Heart left ventricle (tissue), 16 donors: ENCODE measurements at regions of chr15 and their contacts with region 1.

Region 1: GRCh38 chr15:37087131-37087588 is 13.2 kb downstream of the MEIS2 start:
- DNase-seq: no peak
- ATAC-seq: peak in 1 of 4 donors; percentile 37
- H3K4me3 ChIP-seq: no peak overlapping the region
- H3K27ac ChIP-seq: peak overlapping the region in 4 of 12 donors; percentile 9 to 56 (median 24)
- H3K4me1 ChIP-seq: peaks cover 0 to 85% (median 34%) of the 10 kb centered on the region in 12 donors
- H3K27me3 ChIP-seq: no peaks in the 10 kb centered on the region
- CTCF ChIP-seq: no peak
- POLR2A ChIP-seq: no peak

Region 2: GRCh38 chr15:36965570-36966342 is 121.4 kb before region 1 on chr15:
- intact Hi-C with region 1: no loop called
- DNase-seq: no peak
- ATAC-seq: peak in 1 of 4 donors; percentile 60
- H3K4me3 ChIP-seq: no peak overlapping the region
- H3K27ac ChIP-seq: peak overlapping the region in 4 of 12 donors; percentile 7 to 30 (median 12)
- H3K4me1 ChIP-seq: peaks cover 0 to 29% (median 10%) of the 10 kb centered on the region in 12 donors
- H3K27me3 ChIP-seq: no peaks in the 10 kb centered on the region
- CTCF ChIP-seq: no peak
- POLR2A ChIP-seq: no peak

Region 3: DNA sequence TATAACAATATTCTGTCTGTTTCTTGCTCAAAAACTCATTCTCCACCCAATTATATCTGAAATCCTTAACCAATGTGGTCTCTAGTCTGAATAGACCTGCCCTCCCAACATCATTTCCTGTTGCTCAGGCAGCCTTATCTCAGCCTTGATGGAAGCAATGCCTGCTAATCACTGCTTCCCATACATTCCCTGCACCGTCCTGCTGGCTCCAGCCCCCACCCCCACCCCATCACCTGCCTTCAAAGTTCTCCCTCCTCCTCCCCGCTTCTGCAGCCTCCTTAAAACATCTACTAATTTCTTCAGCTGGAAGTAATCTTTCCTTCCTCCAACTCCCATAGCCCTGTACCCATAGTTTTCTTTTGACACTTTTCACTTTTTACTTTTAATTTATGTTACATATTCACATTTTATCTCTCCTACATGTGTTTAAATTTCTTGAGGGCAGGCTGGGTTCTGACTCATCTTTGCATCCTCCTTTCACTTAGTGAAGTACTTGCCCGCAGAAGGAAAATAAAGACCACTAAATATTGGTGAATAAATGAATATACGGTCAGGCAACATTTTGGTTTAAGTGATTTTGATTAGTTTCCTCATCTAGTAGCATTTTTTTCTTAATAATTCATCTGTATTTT is 85.0 kb before region 1 on chr15:
- intact Hi-C with region 1: loop called in 3 of 10 experiments (anchors 5 to 10 kb)
- DNase-seq: no peak
- ATAC-seq: no peak
- H3K4me3 ChIP-seq: no peak overlapping the region
- H3K27ac ChIP-seq: no peak overlapping the region
- H3K4me1 ChIP-seq: peaks cover 0 to 28% (median 3%) of the 10 kb centered on the region in 12 donors
- H3K27me3 ChIP-seq: no peaks in the 10 kb centered on the region
- CTCF ChIP-seq: no peak
- POLR2A ChIP-seq: no peak